Activated T-helper 1 cell treated with anti-CD3 and anti-CD28 coated beads, Interleukin-12 subunit alpha, Interleukin-12 subunit beta, Interleukin-2, Interleukin-4 antibody, amounts not matched to agents 30 ng/mL and 10 ng/mL and 1 ng/mL, durations not matched to agents 14 hours and 24 hours and 36 hours (primary cell): ENCODE measurements at regions of chr5 and their contacts with region 1.

Region 1: GRCh38 chr5:127564002-127564769 is 46.7 kb downstream of the PRRC1 start:
- DNase-seq: peak; percentile 16
- H3K4me3 Mint-ChIP-seq: no peak overlapping the region
- H3K27ac Mint-ChIP-seq: no peak overlapping the region
- H3K4me1 Mint-ChIP-seq: peaks cover 15% of the 10 kb centered on the region
- H3K27me3 Mint-ChIP-seq: peaks cover 11% of the 10 kb centered on the region

Region 2: DNA sequence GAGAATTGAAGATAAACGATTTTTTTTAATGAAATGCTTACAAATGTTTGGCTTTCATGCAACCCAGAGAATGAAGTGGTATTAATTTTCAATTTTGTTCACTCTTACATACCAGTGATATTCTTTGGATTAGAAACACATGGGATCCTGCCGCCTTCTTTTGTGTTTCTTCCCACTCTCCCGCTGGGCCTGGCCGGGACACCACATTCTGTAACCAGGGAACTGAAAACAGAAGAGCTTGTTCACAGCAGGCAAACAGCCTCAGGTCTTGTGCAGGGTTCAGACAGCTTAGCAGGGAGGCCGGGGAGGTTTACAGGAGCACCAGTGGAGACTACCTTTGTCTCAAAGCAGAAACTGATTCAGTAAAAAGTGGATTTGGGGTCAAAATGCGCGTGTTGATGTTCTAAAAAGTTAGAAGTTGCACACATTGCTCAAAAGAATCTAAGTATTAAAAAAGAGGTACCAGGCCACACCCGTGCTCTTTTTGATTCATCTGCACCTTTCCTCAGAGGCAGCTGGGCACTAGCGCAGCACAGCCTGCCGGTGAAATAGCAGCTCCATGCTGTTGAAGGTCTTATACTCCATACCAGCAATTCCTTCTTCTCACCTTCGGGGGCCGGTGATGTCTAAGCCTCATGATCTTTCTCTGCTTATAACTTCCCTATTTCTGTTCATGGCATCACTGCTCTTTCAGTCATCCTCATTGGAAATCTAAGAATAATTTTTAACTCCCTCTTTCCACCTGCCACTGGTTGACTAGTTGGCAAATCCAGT is 1073.8 kb before region 1 on chr5:
- intact Hi-C with region 1: no loop called
- DNase-seq: no peak
- H3K4me3 Mint-ChIP-seq: no peak overlapping the region
- H3K27ac Mint-ChIP-seq: no peak overlapping the region
- H3K4me1 Mint-ChIP-seq: no peaks in the 10 kb centered on the region
- H3K27me3 Mint-ChIP-seq: no peaks in the 10 kb centered on the region

Region 3: DNA sequence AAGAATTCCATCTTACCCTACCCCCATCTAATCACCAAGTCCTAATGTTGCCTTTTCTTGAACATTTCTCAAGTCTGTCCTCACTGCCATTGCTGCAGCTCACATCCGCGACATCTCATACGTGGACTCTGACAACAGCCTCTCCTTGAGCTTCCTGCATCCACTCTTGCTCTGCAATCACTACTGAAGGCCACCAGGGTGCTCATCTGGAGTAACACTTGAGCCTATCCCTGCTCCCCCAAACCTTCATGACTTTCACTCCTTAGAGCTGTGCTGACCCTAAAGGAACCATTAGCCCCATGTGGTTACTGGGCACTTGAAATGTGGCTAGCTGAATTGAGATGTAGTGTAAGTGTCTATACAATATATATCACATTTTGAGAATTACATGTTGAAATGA is 38.3 kb after region 1 on chr5:
- intact Hi-C with region 1: no loop called
- DNase-seq: no peak
- H3K4me3 Mint-ChIP-seq: no peak overlapping the region
- H3K27ac Mint-ChIP-seq: no peak overlapping the region
- H3K4me1 Mint-ChIP-seq: peaks cover 5% of the 10 kb centered on the region
- H3K27me3 Mint-ChIP-seq: no peaks in the 10 kb centered on the region

Region 4: DNA sequence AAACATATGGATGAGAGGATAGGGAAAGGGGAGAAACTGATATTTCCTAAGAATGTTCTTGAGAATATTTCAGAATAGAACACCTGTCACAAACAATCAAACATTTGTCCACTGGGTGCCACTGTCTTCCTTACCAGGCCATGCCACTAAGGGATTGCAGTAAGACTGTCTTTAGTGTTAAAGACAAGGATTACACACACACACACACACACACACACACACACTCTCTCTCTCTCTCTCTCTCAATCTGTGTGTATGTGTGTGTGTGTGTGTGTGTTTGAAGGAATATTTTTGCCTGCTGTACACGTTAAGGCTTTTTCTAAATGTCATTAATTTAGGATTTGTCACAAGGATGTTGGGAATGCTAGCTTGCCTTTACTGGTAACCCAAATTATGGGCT is 193.4 kb after region 1 on chr5:
- intact Hi-C with region 1: loop called (anchors 10 kb)
- DNase-seq: no peak
- H3K4me3 Mint-ChIP-seq: no peak overlapping the region
- H3K27ac Mint-ChIP-seq: no peak overlapping the region
- H3K4me1 Mint-ChIP-seq: no peaks in the 10 kb centered on the region
- H3K27me3 Mint-ChIP-seq: peaks cover 3% of the 10 kb centered on the region

Region 5: GRCh38 chr5:127909078-127909477 is 344.9 kb after region 1 on chr5:
- intact Hi-C with region 1: loop called (anchors 10 kb)
- DNase-seq: no peak
- H3K4me3 Mint-ChIP-seq: no peak overlapping the region
- H3K27ac Mint-ChIP-seq: no peak overlapping the region
- H3K4me1 Mint-ChIP-seq: peaks cover 10% of the 10 kb centered on the region
- H3K27me3 Mint-ChIP-seq: peaks cover 13% of the 10 kb centered on the region

Region 6: GRCh38 chr5:128498844-128499455 is 934.8 kb after region 1 on chr5:
- intact Hi-C with region 1: loop called (anchors 5 kb)
- DNase-seq: no peak
- H3K4me3 Mint-ChIP-seq: no peak overlapping the region
- H3K27ac Mint-ChIP-seq: no peak overlapping the region
- H3K4me1 Mint-ChIP-seq: no peaks in the 10 kb centered on the region
- H3K27me3 Mint-ChIP-seq: no peaks in the 10 kb centered on the region

Region 7: GRCh38 chr5:128674825-128675446 is 1110.8 kb after region 1 on chr5:
- intact Hi-C with region 1: loop called (anchors 1 kb)
- DNase-seq: no peak
- H3K4me3 Mint-ChIP-seq: no peak overlapping the region
- H3K27ac Mint-ChIP-seq: no peak overlapping the region
- H3K4me1 Mint-ChIP-seq: no peaks in the 10 kb centered on the region
- H3K27me3 Mint-ChIP-seq: peaks cover 3% of the 10 kb centered on the region